Activated naive CD4-positive, alpha-beta T cell treated with anti-CD3 and anti-CD28 coated beads for 36 hours (primary cell): ENCODE measurements at regions of chr9 and their contacts with region 1.

Region 1: GRCh38 chr9:100411472-100412283 is 15.3 kb upstream of the MSANTD3 start:
- DNase-seq: peak; percentile 93
- H3K4me3 Mint-ChIP-seq: peak overlapping the region; percentile 82
- H3K27ac Mint-ChIP-seq: peak overlapping the region; percentile 32
- H3K4me1 Mint-ChIP-seq: peaks cover 13% of the 10 kb centered on the region
- H3K27me3 Mint-ChIP-seq: peaks cover 17% of the 10 kb centered on the region

Region 2: GRCh38 chr9:99906403-99907207 is 505.1 kb before region 1 on chr9 and contains the start of gene STX17:
- CTCF ChIA-PET with region 1: no interaction called
- intact Hi-C with region 1: loop called (anchors 5 kb)
- DNase-seq: peak; percentile 75
- H3K4me3 Mint-ChIP-seq: peak within 1 kb of the TSS; percentile 95
- H3K27ac Mint-ChIP-seq: peak within 1 kb of the TSS; percentile 95
- H3K4me1 Mint-ChIP-seq: peaks cover 22% of the 10 kb centered on the region
- H3K27me3 Mint-ChIP-seq: no peaks in the 10 kb centered on the region
- total RNA-seq, gene STX17: 28.1 to 31.6 TPM

Region 3: GRCh38 chr9:100091650-100092049 is 320.0 kb before region 1 on chr9:
- CTCF ChIA-PET with region 1: no interaction called
- intact Hi-C with region 1: no loop called
- DNase-seq: no peak
- H3K4me3 Mint-ChIP-seq: no peak overlapping the region
- H3K27ac Mint-ChIP-seq: no peak overlapping the region
- H3K4me1 Mint-ChIP-seq: peaks cover 58% of the 10 kb centered on the region
- H3K27me3 Mint-ChIP-seq: no peaks in the 10 kb centered on the region

Region 4: GRCh38 chr9:100426530-100427428 is 15.1 kb after region 1 on chr9 and contains the start of gene MSANTD3:
- CTCF ChIA-PET with region 1: interaction called, 4 read pairs
- intact Hi-C with region 1: loop called (anchors 1 kb)
- DNase-seq: peak; percentile 52
- H3K4me3 Mint-ChIP-seq: peak within 1 kb of the TSS; percentile 91
- H3K27ac Mint-ChIP-seq: peak within 1 kb of the TSS; percentile 82
- H3K4me1 Mint-ChIP-seq: peaks cover 30% of the 10 kb centered on the region
- H3K27me3 Mint-ChIP-seq: no peaks in the 10 kb centered on the region
- total RNA-seq, gene MSANTD3: 10.4 to 11.5 TPM